ENCODE measurements at regions of chr2 and their contacts with region 1.

Region 1: DNA sequence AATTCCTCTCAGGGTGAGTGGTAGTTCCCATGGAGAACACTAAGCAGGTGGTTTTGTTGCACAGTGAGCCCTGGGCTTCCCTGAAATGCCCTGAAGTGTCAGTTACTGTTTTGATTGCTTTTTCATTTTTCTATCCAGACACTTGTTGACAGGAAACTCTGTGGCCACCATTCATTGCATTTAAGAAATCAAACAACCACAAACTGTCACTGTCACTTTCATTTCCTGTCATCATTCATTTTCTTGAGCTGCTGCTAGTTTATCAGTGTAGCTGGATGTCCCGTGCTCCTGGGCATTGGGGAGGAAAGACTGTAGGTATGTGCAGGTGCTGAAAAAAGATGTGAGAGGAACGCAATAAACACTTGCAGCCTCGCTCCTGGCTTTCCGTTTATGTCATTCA is 891.6 kb upstream of the ZEB2 start:
- DNase-seq: peak in 6 of 9 donors; percentile 1 to 40 (median 8)
- ATAC-seq: peak; percentile 72
- H3K4me3 ChIP-seq: no peak overlapping the region
- H3K4me3 Mint-ChIP-seq: peak overlapping the region in 1 of 10 donors; percentile 58
- H3K27ac ChIP-seq: no peak overlapping the region
- H3K27ac Mint-ChIP-seq: peak overlapping the region in 2 of 9 donors; percentile 50 to 70
- H3K4me1 ChIP-seq: peaks cover 0 to 5% of the 10 kb centered on the region in 2 donors
- H3K4me1 Mint-ChIP-seq: peaks cover 0 to 27% (median 12%) of the 10 kb centered on the region in 7 donors
- H3K27me3 ChIP-seq: no peaks in the 10 kb centered on the region
- H3K27me3 Mint-ChIP-seq: peaks cover 0 to 59% (median 7%) of the 10 kb centered on the region in 5 donors

Region 2: GRCh38 chr2:144529841-144530240 is 881.7 kb before region 1 on chr2:
- CTCF ChIA-PET with region 1: no interaction called
- POLR2A ChIA-PET with region 1: no interaction called
- intact Hi-C with region 1: loop called in 1 of 2 experiments (anchors 5 kb)
- DNase-seq: no peak
- ATAC-seq: no peak
- H3K4me3 ChIP-seq: no peak overlapping the region
- H3K4me3 Mint-ChIP-seq: no peak overlapping the region
- H3K27ac ChIP-seq: no peak overlapping the region
- H3K27ac Mint-ChIP-seq: no peak overlapping the region
- H3K4me1 ChIP-seq: no peaks in the 10 kb centered on the region
- H3K4me1 Mint-ChIP-seq: peaks cover under 1 to 2% (median under 1%) of the 10 kb centered on the region in 7 donors
- H3K27me3 ChIP-seq: peaks cover 0 to 8% of the 10 kb centered on the region in 2 donors
- H3K27me3 Mint-ChIP-seq: peaks cover 29 to 82% (median 49%) of the 10 kb centered on the region in 5 donors

Region 3: GRCh38 chr2:145258903-145259579 is 152.5 kb before region 1 on chr2:
- CTCF ChIA-PET with region 1: no interaction called
- POLR2A ChIA-PET with region 1: no interaction called
- intact Hi-C with region 1: loop called in 1 of 2 experiments (anchors 1 kb)
- DNase-seq: peak in 6 of 9 donors; percentile 2 to 39 (median 16)
- ATAC-seq: peak; percentile 87
- H3K4me3 ChIP-seq: no peak overlapping the region
- H3K4me3 Mint-ChIP-seq: no peak overlapping the region
- H3K27ac ChIP-seq: no peak overlapping the region
- H3K27ac Mint-ChIP-seq: no peak overlapping the region
- H3K4me1 ChIP-seq: no peaks in the 10 kb centered on the region
- H3K4me1 Mint-ChIP-seq: peaks cover 0 to 8% (median 2%) of the 10 kb centered on the region in 7 donors
- H3K27me3 ChIP-seq: no peaks in the 10 kb centered on the region
- H3K27me3 Mint-ChIP-seq: peaks cover 0 to 45% (median 42%) of the 10 kb centered on the region in 5 donors

Region 4: DNA sequence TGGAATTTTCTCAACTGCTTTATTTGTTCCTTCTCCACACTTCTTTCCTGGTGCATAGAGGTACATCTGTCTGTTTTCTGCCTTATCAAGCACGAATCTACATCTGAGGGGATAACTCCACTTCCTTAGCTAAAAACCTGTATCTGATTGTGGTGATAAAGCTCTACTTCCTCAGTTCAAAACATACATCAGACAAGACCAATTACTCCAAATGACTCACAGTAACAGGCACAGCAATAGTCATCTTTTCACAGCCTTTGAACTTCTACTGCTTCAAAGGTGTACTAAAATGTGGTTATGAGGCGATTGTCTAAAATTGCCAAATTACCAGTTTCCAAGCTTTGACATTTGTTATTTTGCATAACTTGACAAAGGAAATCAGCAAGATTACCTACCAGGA is 88.0 kb before region 1 on chr2:
- CTCF ChIA-PET with region 1: no interaction called
- POLR2A ChIA-PET with region 1: no interaction called
- intact Hi-C with region 1: loop called in 1 of 2 experiments (anchors 1 kb)
- DNase-seq: peak in 3 of 9 donors; percentile 1 to 18 (median 3)
- ATAC-seq: peak; percentile 55
- H3K4me3 ChIP-seq: no peak overlapping the region
- H3K4me3 Mint-ChIP-seq: peak overlapping the region in 1 of 10 donors; percentile 13
- H3K27ac ChIP-seq: no peak overlapping the region
- H3K27ac Mint-ChIP-seq: no peak overlapping the region
- H3K4me1 ChIP-seq: no peaks in the 10 kb centered on the region
- H3K4me1 Mint-ChIP-seq: peaks cover 0 to 22% (median 7%) of the 10 kb centered on the region in 7 donors
- H3K27me3 ChIP-seq: no peaks in the 10 kb centered on the region
- H3K27me3 Mint-ChIP-seq: peaks cover 0 to 14% (median 4%) of the 10 kb centered on the region in 5 donors